B cell (primary cell): ENCODE measurements at regions of chr1 and their contacts with region 1.

Region 1: GRCh38 chr1:33640114-33640660 is 167.7 kb downstream of the ZSCAN20 start:
- DNase-seq: no peak
- ATAC-seq: no peak
- H3K4me3 ChIP-seq: no peak overlapping the region
- H3K4me3 Mint-ChIP-seq: no peak overlapping the region
- H3K27ac ChIP-seq: no peak overlapping the region
- H3K27ac Mint-ChIP-seq: no peak overlapping the region
- H3K4me1 ChIP-seq: no peaks in the 10 kb centered on the region
- H3K4me1 Mint-ChIP-seq: no peaks in the 10 kb centered on the region
- H3K27me3 ChIP-seq: peaks cover 0 to 15% (median 3%) of the 10 kb centered on the region in 4 experiments
- H3K27me3 Mint-ChIP-seq: peaks cover 42% of the 10 kb centered on the region
- CTCF ChIP-seq: no peak

Region 2: GRCh38 chr1:33137800-33138199 is 502.4 kb before region 1 on chr1:
- CTCF ChIA-PET with region 1: no interaction called
- POLR2A ChIA-PET with region 1: no interaction called
- intact Hi-C with region 1: no loop called
- DNase-seq: peak; percentile 44
- ATAC-seq: no peak
- H3K4me3 ChIP-seq: no peak overlapping the region
- H3K4me3 Mint-ChIP-seq: no peak overlapping the region
- H3K27ac ChIP-seq: no peak overlapping the region
- H3K27ac Mint-ChIP-seq: no peak overlapping the region
- H3K4me1 ChIP-seq: no peaks in the 10 kb centered on the region
- H3K4me1 Mint-ChIP-seq: no peaks in the 10 kb centered on the region
- H3K27me3 ChIP-seq: no peaks in the 10 kb centered on the region
- H3K27me3 Mint-ChIP-seq: no peaks in the 10 kb centered on the region
- CTCF ChIP-seq: peak; percentile 36

Region 3: DNA sequence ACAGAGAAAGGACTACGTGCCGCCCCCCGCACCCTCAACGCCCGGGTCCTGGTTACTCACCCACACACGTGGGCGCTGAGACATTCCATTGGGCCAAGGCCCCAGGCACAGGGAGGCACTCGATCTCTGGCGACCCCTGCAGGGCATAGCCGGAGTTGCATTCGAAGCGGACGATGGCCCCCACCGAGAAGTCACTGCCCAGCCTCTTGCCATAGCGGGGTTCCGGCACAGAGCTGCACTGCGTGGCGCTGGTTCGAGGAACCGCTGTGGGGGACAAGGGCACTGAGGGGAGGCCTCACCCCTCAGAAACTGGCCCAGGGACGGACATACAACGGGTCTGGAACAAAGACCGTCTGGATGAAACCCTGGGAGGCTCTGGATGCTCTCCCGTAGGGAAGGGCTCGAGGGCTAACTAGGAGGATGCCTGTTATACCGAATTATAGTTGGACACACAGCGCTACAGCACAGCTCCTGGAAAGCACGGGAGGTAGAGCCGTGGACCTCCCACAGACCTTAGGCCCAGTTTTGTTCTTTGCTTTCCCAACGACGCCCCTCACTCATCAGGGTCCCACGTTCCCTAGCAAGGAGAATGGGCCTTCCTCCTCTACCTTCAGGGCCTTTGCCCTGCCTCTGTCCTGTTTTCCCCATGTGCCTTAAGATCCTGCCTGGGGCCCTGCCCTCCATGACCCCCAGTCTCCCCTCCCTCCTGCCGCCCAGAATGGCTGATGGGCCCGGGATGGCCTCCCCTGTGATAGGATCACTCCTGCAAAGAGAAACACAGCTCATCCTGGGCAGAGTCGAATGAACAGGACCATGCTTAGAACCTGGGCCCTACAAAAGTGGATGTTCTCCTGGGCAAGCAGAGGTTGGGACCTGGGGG is 15.0 kb before region 1 on chr1:
- CTCF ChIA-PET with region 1: interaction called, 10 read pairs
- POLR2A ChIA-PET with region 1: no interaction called
- intact Hi-C with region 1: no loop called
- DNase-seq: no peak
- ATAC-seq: no peak
- H3K4me3 ChIP-seq: no peak overlapping the region
- H3K4me3 Mint-ChIP-seq: no peak overlapping the region
- H3K27ac ChIP-seq: no peak overlapping the region
- H3K27ac Mint-ChIP-seq: no peak overlapping the region
- H3K4me1 ChIP-seq: no peaks in the 10 kb centered on the region
- H3K4me1 Mint-ChIP-seq: no peaks in the 10 kb centered on the region
- H3K27me3 ChIP-seq: peaks cover 0 to 5% (median 2%) of the 10 kb centered on the region in 4 experiments
- H3K27me3 Mint-ChIP-seq: peaks cover 29% of the 10 kb centered on the region
- CTCF ChIP-seq: peak; percentile 28

Region 4: DNA sequence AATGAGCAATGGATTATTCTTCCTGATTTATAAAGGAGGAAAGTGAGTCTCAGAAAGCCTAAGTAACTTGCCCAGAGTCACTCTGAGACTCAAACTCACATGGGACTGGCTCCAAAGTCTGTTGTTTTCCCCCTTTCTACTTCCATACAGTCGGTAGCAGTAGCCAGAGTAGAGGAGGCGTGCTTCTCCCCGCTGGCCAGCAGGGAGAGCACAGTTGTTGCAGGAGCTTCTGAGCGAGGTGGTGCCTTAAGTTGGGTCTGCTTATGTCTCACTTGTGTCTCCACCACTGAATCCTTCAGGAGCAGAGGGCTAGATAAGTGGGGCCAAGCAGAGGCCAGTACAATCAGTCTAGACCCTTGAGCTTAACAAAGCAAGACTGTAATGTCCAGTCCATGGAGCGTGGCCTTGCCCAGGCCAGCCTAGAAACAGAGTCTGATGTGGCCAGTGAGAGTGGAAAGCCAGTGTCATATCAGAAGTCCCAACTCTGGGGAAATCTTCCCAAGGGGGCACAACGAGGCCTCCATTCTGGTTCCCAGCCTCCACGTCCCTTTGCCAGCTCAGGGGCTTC is 14.2 kb after region 1 on chr1:
- CTCF ChIA-PET with region 1: no interaction called
- POLR2A ChIA-PET with region 1: no interaction called
- intact Hi-C with region 1: no loop called
- DNase-seq: no peak
- ATAC-seq: no peak
- H3K4me3 ChIP-seq: no peak overlapping the region
- H3K4me3 Mint-ChIP-seq: no peak overlapping the region
- H3K27ac ChIP-seq: no peak overlapping the region
- H3K27ac Mint-ChIP-seq: no peak overlapping the region
- H3K4me1 ChIP-seq: no peaks in the 10 kb centered on the region
- H3K4me1 Mint-ChIP-seq: no peaks in the 10 kb centered on the region
- H3K27me3 ChIP-seq: no peaks in the 10 kb centered on the region
- H3K27me3 Mint-ChIP-seq: peaks cover 7% of the 10 kb centered on the region
- CTCF ChIP-seq: no peak

Region 5: GRCh38 chr1:33768821-33769220 is 128.6 kb after region 1 on chr1:
- CTCF ChIA-PET with region 1: no interaction called
- POLR2A ChIA-PET with region 1: no interaction called
- intact Hi-C with region 1: no loop called
- DNase-seq: no peak
- ATAC-seq: no peak
- H3K4me3 ChIP-seq: no peak overlapping the region
- H3K4me3 Mint-ChIP-seq: no peak overlapping the region
- H3K27ac ChIP-seq: no peak overlapping the region
- H3K27ac Mint-ChIP-seq: no peak overlapping the region
- H3K4me1 ChIP-seq: no peaks in the 10 kb centered on the region
- H3K4me1 Mint-ChIP-seq: no peaks in the 10 kb centered on the region
- H3K27me3 ChIP-seq: peaks cover 0 to 4% (median 0%) of the 10 kb centered on the region in 4 experiments
- H3K27me3 Mint-ChIP-seq: peaks cover 27% of the 10 kb centered on the region
- CTCF ChIP-seq: no peak